Right ventricle myocardium inferior (tissue), 1 donor: ENCODE measurements at regions of chr16 and their contacts with region 1.

Region 1: GRCh38 chr16:24609740-24610415 is 70.5 kb downstream of the RBBP6 start:
- DNase-seq: no peak
- ATAC-seq: peak; percentile 44

Region 2: DNA sequence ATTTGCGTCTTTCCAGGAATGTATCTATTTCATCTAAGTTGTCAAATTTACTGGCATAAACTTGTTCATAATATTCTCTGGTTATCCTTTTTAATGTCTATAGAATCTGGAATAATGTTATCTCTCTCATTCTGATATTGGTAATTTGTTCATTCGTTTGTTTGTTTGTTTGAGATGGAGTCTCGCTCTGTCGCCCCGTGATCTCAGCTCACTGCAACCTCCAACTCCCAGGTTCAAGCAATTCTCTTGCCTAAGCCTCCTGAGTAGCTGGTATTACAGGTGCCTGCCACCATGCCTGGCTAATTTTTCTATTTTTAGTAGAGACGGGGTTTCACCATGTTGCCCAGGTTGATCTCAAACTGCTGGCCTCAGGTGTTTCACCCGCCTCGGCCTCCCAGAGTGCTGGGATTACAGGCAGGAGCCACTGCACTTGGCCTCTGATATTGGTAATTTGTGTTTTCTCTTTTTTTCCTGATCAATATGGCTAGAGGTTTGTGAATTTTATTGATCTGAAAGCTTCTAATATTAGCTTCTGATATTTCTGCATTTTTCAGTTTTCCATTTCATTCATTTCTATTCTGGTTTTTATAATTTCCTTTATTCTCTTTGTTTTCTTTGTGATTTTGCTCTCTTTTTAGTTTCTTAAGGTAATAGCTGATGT is 11.0 kb before region 1 on chr16:
- intact Hi-C with region 1: no loop called
- DNase-seq: no peak
- ATAC-seq: no peak

Region 3: DNA sequence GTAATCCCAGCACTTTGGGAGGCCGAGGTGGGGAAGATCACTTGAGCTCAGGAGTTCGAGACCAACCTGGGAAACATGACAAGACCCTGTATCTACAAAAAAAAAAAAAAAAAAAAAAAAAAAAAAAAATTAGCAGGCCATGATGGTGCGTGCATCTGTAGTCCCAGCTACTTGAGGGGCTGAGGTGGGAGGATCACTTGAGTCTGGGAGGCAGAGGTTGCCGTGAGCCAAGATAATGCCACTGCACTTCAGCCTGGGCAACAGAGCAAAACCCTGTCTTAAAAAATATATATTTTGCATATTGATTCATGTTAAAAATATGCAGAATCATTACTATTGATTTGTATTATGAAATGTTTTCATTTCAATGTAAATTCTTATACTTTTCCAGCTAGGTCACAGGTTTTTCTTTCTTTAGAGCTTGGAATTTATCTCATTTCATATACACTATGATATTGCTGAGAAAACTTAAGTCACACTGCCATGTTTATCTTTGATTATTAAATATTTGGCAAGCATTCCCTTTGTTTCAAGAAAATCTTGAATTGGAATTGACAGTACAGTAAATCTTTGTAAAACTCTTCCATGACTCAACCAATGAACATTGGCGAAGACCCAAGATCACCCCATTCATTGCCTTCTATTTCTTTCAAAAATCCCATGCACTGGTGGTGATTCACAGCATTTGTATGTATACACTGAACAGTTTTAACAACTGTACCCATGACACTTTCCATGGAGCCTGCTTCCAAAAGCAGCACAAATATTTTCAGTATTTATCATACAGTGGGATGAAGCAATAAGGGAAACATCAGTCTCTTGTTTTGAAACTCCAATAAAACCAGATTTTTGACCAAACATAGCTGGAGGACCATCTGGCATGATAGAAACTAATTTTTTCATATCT is 36.1 kb after region 1 on chr16:
- intact Hi-C with region 1: no loop called
- DNase-seq: no peak
- ATAC-seq: peak; percentile 39

Region 4: DNA sequence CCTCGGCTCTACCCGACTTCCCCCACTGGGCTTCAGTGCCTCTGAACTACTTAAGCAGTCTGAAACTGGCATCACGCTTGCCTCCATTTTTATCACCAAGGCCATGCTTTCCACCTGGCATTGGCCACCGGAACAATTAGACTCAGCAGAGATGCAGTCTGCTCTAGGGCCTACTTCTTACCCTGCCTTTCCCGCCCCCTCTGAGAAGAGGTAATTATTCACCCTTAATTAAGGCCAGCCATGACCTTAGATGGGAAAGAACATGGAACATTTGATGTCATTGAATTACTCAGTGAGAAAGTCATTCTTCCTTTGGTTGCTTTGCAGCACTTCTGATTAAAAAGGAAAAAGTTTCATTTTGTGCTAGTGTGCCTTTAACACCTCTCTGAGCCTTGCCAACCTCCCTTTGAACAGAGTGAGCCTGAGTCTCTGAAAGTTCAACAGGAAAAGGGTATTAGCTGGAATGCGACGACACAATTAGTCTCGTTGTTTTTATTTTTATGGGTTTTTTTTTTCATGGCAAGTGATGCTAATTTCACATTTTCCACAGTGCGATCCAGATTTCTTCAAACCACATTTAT is 58.7 kb after region 1 on chr16:
- intact Hi-C with region 1: loop called (anchors 10 kb)
- DNase-seq: no peak
- ATAC-seq: no peak